Aorta (tissue), 5 donors: ENCODE measurements at regions of chr4 and their contacts with region 1.

Region 1: GRCh38 chr4:23680671-23681518 is 209.0 kb downstream of the PPARGC1A start:
- DNase-seq: no peak
- ATAC-seq: no peak
- H3K4me3 ChIP-seq: no peak overlapping the region
- H3K27ac ChIP-seq: no peak overlapping the region
- H3K4me1 ChIP-seq: no peaks in the 10 kb centered on the region
- H3K27me3 ChIP-seq: no peaks in the 10 kb centered on the region

Region 2: GRCh38 chr4:23438764-23439163 is 242.1 kb before region 1 on chr4:
- intact Hi-C with region 1: no loop called
- DNase-seq: no peak
- ATAC-seq: no peak
- H3K4me3 ChIP-seq: no peak overlapping the region
- H3K27ac ChIP-seq: no peak overlapping the region
- H3K4me1 ChIP-seq: no peaks in the 10 kb centered on the region
- H3K27me3 ChIP-seq: no peaks in the 10 kb centered on the region

Region 3: GRCh38 chr4:23770011-23770410 is 89.1 kb after region 1 on chr4:
- intact Hi-C with region 1: no loop called
- DNase-seq: no peak
- ATAC-seq: no peak
- H3K4me3 ChIP-seq: no peak overlapping the region
- H3K27ac ChIP-seq: no peak overlapping the region
- H3K4me1 ChIP-seq: no peaks in the 10 kb centered on the region
- H3K27me3 ChIP-seq: no peaks in the 10 kb centered on the region

Region 4: DNA sequence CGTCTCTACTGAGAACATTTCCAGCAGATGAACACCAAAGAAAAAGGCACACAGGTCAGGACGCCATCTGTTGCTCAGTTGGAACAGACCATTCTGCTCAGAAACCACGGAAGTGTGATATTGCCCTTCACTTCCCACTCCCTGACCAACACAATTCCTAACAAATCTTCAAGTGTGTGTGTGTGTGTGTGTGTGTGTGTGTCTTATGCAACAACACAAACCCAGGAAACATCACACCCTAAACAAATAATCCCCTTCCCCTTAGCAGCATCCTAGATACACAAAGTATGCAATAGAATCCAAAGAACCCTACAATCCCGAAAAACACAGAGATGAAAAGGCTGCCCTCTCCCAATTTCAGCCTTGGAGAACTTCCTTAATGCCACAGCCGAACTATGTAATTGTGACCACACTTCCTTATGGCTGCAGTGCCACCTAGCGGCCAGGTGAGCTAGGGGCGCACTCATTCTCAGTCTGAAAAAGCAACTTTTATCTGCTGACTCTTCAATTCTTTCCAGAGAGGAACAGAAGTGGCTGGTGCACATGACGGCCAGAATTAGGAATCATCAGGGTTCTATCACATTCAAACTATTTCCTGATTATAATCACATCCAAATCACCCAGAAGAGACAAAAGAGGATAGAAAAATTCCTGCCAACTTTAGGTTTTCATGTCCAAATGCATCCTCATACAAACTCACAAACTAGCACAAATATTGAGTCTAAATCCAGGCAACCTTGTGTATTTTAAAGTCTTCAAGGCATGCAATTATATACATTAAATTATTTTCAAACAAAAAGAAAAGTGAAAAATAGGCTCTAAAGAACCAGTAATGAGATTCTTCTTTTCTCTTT is 738.5 kb after region 1 on chr4:
- intact Hi-C with region 1: loop called (anchors 5 to 10 kb)
- DNase-seq: peak; percentile 65 to 91
- ATAC-seq: peak; percentile 83
- H3K4me3 ChIP-seq: no peak overlapping the region
- H3K27ac ChIP-seq: no peak overlapping the region
- H3K4me1 ChIP-seq: no peaks in the 10 kb centered on the region
- H3K27me3 ChIP-seq: no peaks in the 10 kb centered on the region